CD4-positive, alpha-beta memory T cell (primary cell): ENCODE measurements at regions of chr2 and their contacts with region 1.

Region 1: GRCh38 chr2:174697255-174697654 is 67.0 kb downstream of the CHRNA1 start:
- DNase-seq: peak; percentile 44 to 57 (median 54)
- H3K4me3 ChIP-seq: no peak overlapping the region
- H3K4me3 Mint-ChIP-seq: no peak overlapping the region
- H3K27ac ChIP-seq: no peak overlapping the region
- H3K27ac Mint-ChIP-seq: no peak overlapping the region
- H3K4me1 ChIP-seq: no peaks in the 10 kb centered on the region
- H3K4me1 Mint-ChIP-seq: peaks cover 0 to 5% (median 4%) of the 10 kb centered on the region in 4 donors
- H3K27me3 ChIP-seq: no peaks in the 10 kb centered on the region
- H3K27me3 Mint-ChIP-seq: peaks cover 3 to 4% of the 10 kb centered on the region in 2 donors

Region 2: GRCh38 chr2:174593574-174594203 is 103.6 kb before region 1 on chr2:
- CTCF ChIA-PET with region 1: interaction called, 10 read pairs
- POLR2A ChIA-PET with region 1: interaction called, 3 read pairs
- intact Hi-C with region 1: no loop called
- DNase-seq: peak; percentile 86 to 90 (median 88)
- H3K4me3 ChIP-seq: peak overlapping the region; percentile 54 to 80
- H3K4me3 Mint-ChIP-seq: peak overlapping the region; percentile 88 to 100 (median 98)
- H3K27ac ChIP-seq: peak overlapping the region; percentile 89
- H3K27ac Mint-ChIP-seq: peak overlapping the region; percentile 92 to 100 (median 98)
- H3K4me1 ChIP-seq: peaks cover 63% of the 10 kb centered on the region
- H3K4me1 Mint-ChIP-seq: peaks cover 40 to 79% (median 53%) of the 10 kb centered on the region in 4 donors
- H3K27me3 ChIP-seq: no peaks in the 10 kb centered on the region
- H3K27me3 Mint-ChIP-seq: peaks cover 0 to 1% of the 10 kb centered on the region in 2 donors

Region 3: GRCh38 chr2:174729797-174730697 is 32.8 kb after region 1 on chr2:
- CTCF ChIA-PET with region 1: interaction called, 24 read pairs
- POLR2A ChIA-PET with region 1: no interaction called
- intact Hi-C with region 1: no loop called
- DNase-seq: peak; percentile 32 to 62 (median 40)
- H3K4me3 ChIP-seq: peak overlapping the region; percentile 17 to 76
- H3K4me3 Mint-ChIP-seq: peak overlapping the region; percentile 86 to 93 (median 90)
- H3K27ac ChIP-seq: no peak overlapping the region
- H3K27ac Mint-ChIP-seq: peak overlapping the region in 6 of 7 donors; percentile 50 to 83 (median 73)
- H3K4me1 ChIP-seq: peaks cover 17% of the 10 kb centered on the region
- H3K4me1 Mint-ChIP-seq: peaks cover 3 to 28% (median 10%) of the 10 kb centered on the region in 4 donors
- H3K27me3 ChIP-seq: no peaks in the 10 kb centered on the region
- H3K27me3 Mint-ChIP-seq: peaks cover 0 to 3% of the 10 kb centered on the region in 2 donors

Region 4: GRCh38 chr2:174778085-174778981 is 81.1 kb after region 1 on chr2:
- CTCF ChIA-PET with region 1: interaction called, 23 read pairs
- POLR2A ChIA-PET with region 1: interaction called, 4 read pairs
- intact Hi-C with region 1: no loop called
- DNase-seq: peak; percentile 90 to 95 (median 93)
- H3K4me3 ChIP-seq: no peak overlapping the region
- H3K4me3 Mint-ChIP-seq: peak overlapping the region; percentile 29 to 84 (median 70)
- H3K27ac ChIP-seq: peak overlapping the region; percentile 57
- H3K27ac Mint-ChIP-seq: peak overlapping the region; percentile 91 to 99 (median 98)
- H3K4me1 ChIP-seq: peaks cover 50% of the 10 kb centered on the region
- H3K4me1 Mint-ChIP-seq: peaks cover 35 to 60% (median 47%) of the 10 kb centered on the region in 4 donors
- H3K27me3 ChIP-seq: no peaks in the 10 kb centered on the region
- H3K27me3 Mint-ChIP-seq: no peaks in the 10 kb centered on the region

Region 5: GRCh38 chr2:175111200-175111657 is 414.0 kb after region 1 on chr2:
- CTCF ChIA-PET with region 1: interaction called, 4 read pairs
- POLR2A ChIA-PET with region 1: no interaction called
- intact Hi-C with region 1: loop called (anchors 1 kb)
- DNase-seq: peak in 4 of 5 donors; percentile 42 to 54 (median 44)
- H3K4me3 ChIP-seq: no peak overlapping the region
- H3K4me3 Mint-ChIP-seq: no peak overlapping the region
- H3K27ac ChIP-seq: no peak overlapping the region
- H3K27ac Mint-ChIP-seq: peak overlapping the region in 6 of 7 donors; percentile 10 to 72 (median 26)
- H3K4me1 ChIP-seq: no peaks in the 10 kb centered on the region
- H3K4me1 Mint-ChIP-seq: peaks cover 0 to 5% (median 5%) of the 10 kb centered on the region in 4 donors
- H3K27me3 ChIP-seq: no peaks in the 10 kb centered on the region
- H3K27me3 Mint-ChIP-seq: no peaks in the 10 kb centered on the region